Activated T-helper 1 cell treated with anti-CD3 and anti-CD28 coated beads, Interleukin-12 subunit alpha, Interleukin-12 subunit beta, Interleukin-2, Interleukin-4 antibody, amounts not matched to agents 30 ng/mL and 10 ng/mL and 1 ng/mL, durations not matched to agents 14 hours and 24 hours and 36 hours (primary cell): ENCODE measurements at regions of chr4 and their contacts with region 1.

Region 1: DNA sequence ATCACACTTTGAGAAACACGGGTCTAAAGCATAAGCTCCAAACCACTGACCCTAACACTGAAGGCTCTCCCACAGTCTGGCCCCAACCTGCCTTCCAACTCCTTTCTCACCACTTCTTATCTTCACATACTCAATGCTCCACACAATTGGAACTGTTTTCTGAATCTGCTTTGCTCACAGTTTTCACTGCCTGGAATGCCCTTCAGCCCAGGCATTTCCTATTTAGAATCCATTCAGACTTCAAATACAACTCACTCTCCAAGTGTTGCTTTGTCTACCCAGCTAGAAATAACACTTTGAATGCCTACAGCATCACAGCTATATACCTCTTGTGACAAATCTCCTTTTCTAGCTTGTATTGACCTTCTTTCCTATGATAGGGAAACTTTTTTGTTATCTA is 10.2 kb downstream of the OTUD4 start:
- DNase-seq: no peak
- H3K4me3 Mint-ChIP-seq: no peak overlapping the region
- H3K27ac Mint-ChIP-seq: no peak overlapping the region
- H3K4me1 Mint-ChIP-seq: peaks cover 49% of the 10 kb centered on the region
- H3K27me3 Mint-ChIP-seq: no peaks in the 10 kb centered on the region

Region 2: DNA sequence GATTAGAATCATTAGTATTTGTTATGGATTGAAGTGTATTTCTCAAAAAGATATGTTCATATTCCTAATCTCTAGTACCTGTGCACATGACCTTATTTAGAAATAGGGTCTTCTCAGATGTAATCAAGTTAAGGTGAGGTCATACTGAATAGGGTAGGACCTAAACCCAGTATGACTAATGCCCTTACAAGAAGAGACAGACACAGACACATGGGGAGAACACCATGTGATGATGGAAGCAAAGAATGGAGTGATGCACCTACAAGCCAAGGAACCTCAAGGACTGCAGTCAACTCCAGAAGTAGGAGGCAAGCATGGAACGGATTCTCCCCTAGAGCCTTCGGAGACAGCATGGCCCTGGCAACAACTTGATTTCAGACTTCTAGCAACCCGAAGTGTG is 21.2 kb before region 1 on chr4:
- intact Hi-C with region 1: loop called (anchors 2 kb)
- DNase-seq: no peak
- H3K4me3 Mint-ChIP-seq: no peak overlapping the region
- H3K27ac Mint-ChIP-seq: no peak overlapping the region
- H3K4me1 Mint-ChIP-seq: peaks cover 10% of the 10 kb centered on the region
- H3K27me3 Mint-ChIP-seq: no peaks in the 10 kb centered on the region